ENCODE measurements at regions of chr1 and their contacts with region 1.

Region 1: DNA sequence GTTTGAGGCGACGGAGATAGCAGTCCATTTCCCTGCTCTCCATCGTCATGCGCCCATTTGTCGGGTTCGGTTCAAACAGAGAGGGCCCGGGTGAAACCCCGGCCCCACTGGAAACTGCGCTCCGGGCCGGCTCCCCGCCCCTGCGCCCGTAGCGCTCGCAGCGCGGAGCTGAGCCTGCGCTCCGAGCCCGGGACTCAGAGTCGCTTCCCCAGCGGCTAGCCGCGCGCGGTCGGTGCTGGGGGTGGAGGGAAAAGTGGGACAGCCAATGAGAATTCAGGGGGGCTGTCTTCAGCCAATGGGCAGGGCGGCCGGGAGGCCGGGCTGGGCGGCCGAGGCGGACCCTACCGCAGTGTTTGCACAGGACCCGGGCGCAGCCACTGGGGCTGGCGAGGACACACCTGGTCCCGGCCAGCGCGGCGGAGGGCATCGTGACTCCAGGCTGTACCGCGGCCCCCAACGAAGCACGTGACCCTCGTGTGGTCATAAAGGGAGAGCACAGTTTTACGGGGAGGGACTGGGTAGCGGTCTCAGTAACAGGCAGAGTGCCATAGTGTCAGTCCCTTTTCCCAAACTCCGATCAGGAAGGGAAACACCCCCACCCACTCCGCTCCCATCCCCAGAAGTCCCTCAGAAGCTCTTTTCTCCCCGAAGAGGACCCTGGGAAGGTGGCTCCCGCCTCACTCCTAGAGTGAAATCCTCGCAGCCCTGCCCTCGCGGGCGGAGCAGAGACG is at the start of gene INKA2:
- DNase-seq: peak in 7 of 9 donors; percentile 22 to 87 (median 33)
- ATAC-seq: peak; percentile 84
- H3K4me3 ChIP-seq: peak within 1 kb of the TSS; percentile 75
- H3K4me3 Mint-ChIP-seq: peak within 1 kb of the TSS; percentile 82 to 95 (median 88)
- H3K27ac ChIP-seq: no peak within 1 kb of the TSS
- H3K27ac Mint-ChIP-seq: peak within 1 kb of the TSS in 6 of 9 donors; percentile 33 to 71 (median 55)
- H3K4me1 ChIP-seq: peaks cover 8 to 10% of the 10 kb centered on the region in 2 donors
- H3K4me1 Mint-ChIP-seq: peaks cover 15 to 21% (median 16%) of the 10 kb centered on the region in 7 donors
- H3K27me3 ChIP-seq: peaks cover 6 to 17% of the 10 kb centered on the region in 2 donors
- H3K27me3 Mint-ChIP-seq: peaks cover 20 to 46% (median 30%) of the 10 kb centered on the region in 5 donors
- total RNA-seq, gene INKA2: 0.94 to 5.6 (median 2.3) TPM in 3 of 5 experiments, not detected in the others

Region 2: GRCh38 chr1:111203681-111204200 is 535.6 kb before region 1 on chr1:
- CTCF ChIA-PET with region 1: no interaction called
- POLR2A ChIA-PET with region 1: no interaction called
- intact Hi-C with region 1: loop called in 1 of 2 experiments (anchors 5 kb)
- DNase-seq: peak; percentile 51 to 86 (median 82)
- ATAC-seq: peak; percentile 71
- H3K4me3 ChIP-seq: peak overlapping the region; percentile 84
- H3K4me3 Mint-ChIP-seq: peak overlapping the region; percentile 90 to 100 (median 99)
- H3K27ac ChIP-seq: peak overlapping the region; percentile 90
- H3K27ac Mint-ChIP-seq: peak overlapping the region; percentile 80 to 99 (median 96)
- H3K4me1 ChIP-seq: peaks cover 30 to 32% of the 10 kb centered on the region in 2 donors
- H3K4me1 Mint-ChIP-seq: peaks cover 32 to 76% (median 61%) of the 10 kb centered on the region in 7 donors
- H3K27me3 ChIP-seq: no peaks in the 10 kb centered on the region
- H3K27me3 Mint-ChIP-seq: no peaks in the 10 kb centered on the region

Region 3: DNA sequence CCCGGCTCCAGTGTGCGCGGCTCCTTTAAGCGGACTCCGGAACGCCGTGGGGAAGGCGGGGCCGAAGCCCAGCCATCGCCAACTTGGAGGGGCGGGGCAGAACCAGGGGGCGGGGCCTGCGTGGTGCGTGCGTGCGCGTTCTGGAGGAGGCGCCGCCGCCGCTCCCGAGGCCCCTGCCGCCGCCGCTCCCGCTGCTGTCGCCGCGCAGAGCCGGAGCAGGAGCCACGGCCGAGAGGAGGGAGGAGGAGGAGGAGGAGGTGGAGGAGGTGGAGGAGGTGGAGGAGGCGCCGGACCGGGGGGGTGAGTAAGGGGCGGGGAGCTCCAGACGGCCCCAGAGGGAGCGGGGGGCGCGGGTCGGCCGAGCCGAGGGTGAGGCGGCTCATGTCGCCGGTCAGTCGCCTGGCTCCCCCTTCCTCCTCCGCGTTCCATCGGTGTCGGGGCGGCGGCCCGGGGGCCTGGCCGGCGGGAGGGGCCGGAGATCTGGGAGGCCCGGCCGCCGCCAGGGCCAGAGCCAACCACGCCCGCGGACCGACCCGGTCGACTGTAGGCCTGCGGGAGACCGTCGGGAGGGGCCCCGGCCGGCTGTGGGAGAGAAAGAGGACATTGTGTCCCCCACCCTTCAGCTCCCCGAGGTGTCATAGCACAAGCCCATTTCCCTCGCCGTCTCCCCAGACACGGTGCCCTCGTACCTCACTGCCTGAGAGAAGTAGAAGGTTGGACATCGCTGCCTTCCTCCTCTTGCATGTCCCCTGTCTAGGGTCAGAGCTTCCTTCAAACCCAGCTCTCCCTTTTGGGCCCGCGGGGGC is 119.5 kb before region 1 on chr1 and contains the start of gene RAP1A:
- CTCF ChIA-PET with region 1: no interaction called
- POLR2A ChIA-PET with region 1: no interaction called
- intact Hi-C with region 1: no loop called
- DNase-seq: peak; percentile 80 to 95 (median 90)
- ATAC-seq: peak; percentile 93
- H3K4me3 ChIP-seq: peak within 1 kb of the TSS; percentile 88
- H3K4me3 Mint-ChIP-seq: peak within 1 kb of the TSS; percentile 93 to 99 (median 96)
- H3K27ac ChIP-seq: peak within 1 kb of the TSS; percentile 91
- H3K27ac Mint-ChIP-seq: peak within 1 kb of the TSS; percentile 86 to 98 (median 95)
- H3K4me1 ChIP-seq: peaks cover 46 to 64% of the 10 kb centered on the region in 2 donors
- H3K4me1 Mint-ChIP-seq: peaks cover 57 to 82% (median 76%) of the 10 kb centered on the region in 7 donors
- H3K27me3 ChIP-seq: no peaks in the 10 kb centered on the region
- H3K27me3 Mint-ChIP-seq: no peaks in the 10 kb centered on the region
- total RNA-seq, gene RAP1A: 89.8 to 183 (median 107) TPM

Region 4: GRCh38 chr1:111720274-111720976 is 18.9 kb before region 1 on chr1:
- CTCF ChIA-PET with region 1: interaction called, 5 read pairs
- POLR2A ChIA-PET with region 1: interaction called, 6 read pairs
- intact Hi-C with region 1: loop called (anchors 1 to 2 kb)
- DNase-seq: no peak
- ATAC-seq: no peak
- H3K4me3 ChIP-seq: no peak overlapping the region
- H3K4me3 Mint-ChIP-seq: no peak overlapping the region
- H3K27ac ChIP-seq: no peak overlapping the region
- H3K27ac Mint-ChIP-seq: peak overlapping the region in 7 of 9 donors; percentile 31 to 80 (median 52)
- H3K4me1 ChIP-seq: peaks cover 0 to 8% of the 10 kb centered on the region in 2 donors
- H3K4me1 Mint-ChIP-seq: peaks cover 9 to 31% (median 19%) of the 10 kb centered on the region in 7 donors
- H3K27me3 ChIP-seq: no peaks in the 10 kb centered on the region
- H3K27me3 Mint-ChIP-seq: no peaks in the 10 kb centered on the region

Region 5: DNA sequence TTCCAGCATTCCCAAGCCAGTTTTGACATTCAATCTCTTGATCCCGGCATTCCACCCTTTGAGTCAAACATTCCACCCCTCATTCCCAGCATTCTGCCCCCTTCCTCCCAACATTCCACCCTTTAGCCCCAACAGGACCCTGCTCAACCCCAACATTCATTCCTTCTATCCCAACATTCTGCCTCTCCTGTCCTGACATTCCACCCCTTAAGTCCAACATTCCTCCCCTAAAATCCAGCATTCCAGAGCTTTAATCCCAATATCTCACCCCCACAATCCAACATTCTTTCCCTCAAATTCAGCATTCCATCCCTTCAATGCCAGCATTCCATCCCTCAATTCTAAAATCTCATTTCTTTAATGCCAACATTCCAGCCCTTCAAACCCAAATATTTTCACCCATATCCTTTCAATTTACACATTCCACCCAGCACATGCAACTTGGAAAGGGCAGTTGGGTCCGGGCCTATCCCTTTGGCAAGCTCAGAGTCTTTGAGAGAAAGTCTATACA is 39.2 kb after region 1 on chr1:
- CTCF ChIA-PET with region 1: no interaction called
- POLR2A ChIA-PET with region 1: no interaction called
- intact Hi-C with region 1: no loop called
- DNase-seq: no peak
- ATAC-seq: no peak
- H3K4me3 ChIP-seq: no peak overlapping the region
- H3K4me3 Mint-ChIP-seq: no peak overlapping the region
- H3K27ac ChIP-seq: no peak overlapping the region
- H3K27ac Mint-ChIP-seq: no peak overlapping the region
- H3K4me1 ChIP-seq: no peaks in the 10 kb centered on the region
- H3K4me1 Mint-ChIP-seq: no peaks in the 10 kb centered on the region
- H3K27me3 ChIP-seq: no peaks in the 10 kb centered on the region
- H3K27me3 Mint-ChIP-seq: peaks cover 0 to 13% (median 0%) of the 10 kb centered on the region in 5 donors

Measured in naive thymus-derived CD4-positive, alpha-beta T cell (primary cell).